Activated CD8-positive, alpha-beta T cell treated with anti-CD3 and anti-CD28 coated beads for 36 hours (primary cell): ENCODE measurements at regions of chr1 and their contacts with region 1.

Region 1: GRCh38 chr1:32892368-32893197 is 6.3 kb downstream of the HPCA start:
- DNase-seq: peak; percentile 75
- ATAC-seq: peak; percentile 93
- H3K4me3 Mint-ChIP-seq: peak overlapping the region; percentile 51
- H3K27ac Mint-ChIP-seq: no peak overlapping the region
- H3K4me1 Mint-ChIP-seq: peaks cover 5% of the 10 kb centered on the region
- H3K27me3 Mint-ChIP-seq: peaks cover 51% of the 10 kb centered on the region
- CTCF ChIP-seq: peak; percentile 86

Region 2: DNA sequence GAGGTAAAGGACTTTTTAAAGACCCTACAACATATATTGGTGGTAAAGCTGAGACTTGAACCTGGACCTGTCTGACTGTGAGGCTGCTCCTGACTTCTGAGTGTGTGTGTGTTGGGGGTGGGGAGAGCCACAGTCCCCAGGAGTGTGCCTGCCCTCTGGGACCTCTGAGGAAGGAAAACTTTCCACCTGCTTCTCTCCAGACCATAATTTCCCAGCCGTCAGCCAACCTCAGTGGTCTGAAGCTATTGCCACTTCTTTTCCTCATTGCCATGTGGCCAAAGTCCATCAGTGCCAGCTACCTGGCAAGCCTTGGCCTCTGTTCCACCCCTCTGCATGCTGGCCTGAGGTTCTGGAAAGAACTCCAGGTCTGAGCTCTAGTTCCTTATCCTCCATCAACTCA is 11.8 kb after region 1 on chr1:
- CTCF ChIA-PET with region 1: interaction called, 12 read pairs
- POLR2A ChIA-PET with region 1: interaction called, 3 read pairs
- intact Hi-C with region 1: no loop called
- DNase-seq: no peak
- ATAC-seq: no peak
- H3K4me3 Mint-ChIP-seq: no peak overlapping the region
- H3K27ac Mint-ChIP-seq: no peak overlapping the region
- H3K4me1 Mint-ChIP-seq: peaks cover 7% of the 10 kb centered on the region
- H3K27me3 Mint-ChIP-seq: peaks cover 29% of the 10 kb centered on the region
- CTCF ChIP-seq: no peak